ENCODE measurements at regions of chr1 and their contacts with region 1.

Region 1: DNA sequence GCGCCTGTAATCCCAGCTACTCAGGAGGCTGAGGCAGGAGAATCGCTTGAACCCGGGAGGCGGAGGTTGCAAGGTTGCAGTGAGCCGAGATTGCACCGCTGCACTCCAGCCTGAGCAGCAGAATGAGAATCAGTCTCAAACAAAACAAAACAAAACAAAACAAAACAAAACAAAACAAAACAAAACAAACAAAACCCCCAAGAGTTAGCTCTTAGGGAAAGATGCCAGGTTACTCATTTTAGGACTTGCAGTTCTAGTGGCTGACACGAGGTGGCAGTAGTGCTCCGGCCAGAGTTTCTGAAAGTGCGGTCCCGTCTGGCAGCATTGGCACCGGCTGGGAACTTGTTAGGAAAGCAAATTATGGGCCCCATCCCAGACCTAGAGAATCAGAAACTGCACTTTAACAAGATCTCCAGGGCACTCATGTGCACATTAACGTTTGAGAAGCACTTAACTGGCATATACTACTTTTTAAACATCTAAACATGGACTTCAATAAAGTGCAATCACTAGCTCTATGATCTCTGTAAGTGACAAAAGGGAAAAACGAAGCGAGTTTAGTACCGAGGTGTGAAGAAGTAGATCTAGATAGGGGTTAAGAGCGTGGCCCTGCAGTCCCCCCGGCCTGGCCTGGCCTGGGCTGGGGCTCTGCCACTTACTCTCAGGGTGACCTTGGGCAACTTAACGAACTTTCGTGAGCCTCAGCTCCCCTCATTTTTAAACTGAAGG is 41.9 kb upstream of the TNFRSF1B start:
- DNase-seq: peak; percentile 88
- H3K4me3 Mint-ChIP-seq: no peak overlapping the region
- H3K27ac Mint-ChIP-seq: no peak overlapping the region
- H3K4me1 Mint-ChIP-seq: peaks cover 44% of the 10 kb centered on the region
- H3K27me3 Mint-ChIP-seq: no peaks in the 10 kb centered on the region

Region 2: GRCh38 chr1:12073796-12074195 is 51.1 kb before region 1 on chr1:
- CTCF ChIA-PET with region 1: no interaction called
- intact Hi-C with region 1: no loop called
- DNase-seq: no peak
- H3K4me3 Mint-ChIP-seq: no peak overlapping the region
- H3K27ac Mint-ChIP-seq: no peak overlapping the region
- H3K4me1 Mint-ChIP-seq: peaks cover 10% of the 10 kb centered on the region
- H3K27me3 Mint-ChIP-seq: peaks cover 15% of the 10 kb centered on the region

Region 3: DNA sequence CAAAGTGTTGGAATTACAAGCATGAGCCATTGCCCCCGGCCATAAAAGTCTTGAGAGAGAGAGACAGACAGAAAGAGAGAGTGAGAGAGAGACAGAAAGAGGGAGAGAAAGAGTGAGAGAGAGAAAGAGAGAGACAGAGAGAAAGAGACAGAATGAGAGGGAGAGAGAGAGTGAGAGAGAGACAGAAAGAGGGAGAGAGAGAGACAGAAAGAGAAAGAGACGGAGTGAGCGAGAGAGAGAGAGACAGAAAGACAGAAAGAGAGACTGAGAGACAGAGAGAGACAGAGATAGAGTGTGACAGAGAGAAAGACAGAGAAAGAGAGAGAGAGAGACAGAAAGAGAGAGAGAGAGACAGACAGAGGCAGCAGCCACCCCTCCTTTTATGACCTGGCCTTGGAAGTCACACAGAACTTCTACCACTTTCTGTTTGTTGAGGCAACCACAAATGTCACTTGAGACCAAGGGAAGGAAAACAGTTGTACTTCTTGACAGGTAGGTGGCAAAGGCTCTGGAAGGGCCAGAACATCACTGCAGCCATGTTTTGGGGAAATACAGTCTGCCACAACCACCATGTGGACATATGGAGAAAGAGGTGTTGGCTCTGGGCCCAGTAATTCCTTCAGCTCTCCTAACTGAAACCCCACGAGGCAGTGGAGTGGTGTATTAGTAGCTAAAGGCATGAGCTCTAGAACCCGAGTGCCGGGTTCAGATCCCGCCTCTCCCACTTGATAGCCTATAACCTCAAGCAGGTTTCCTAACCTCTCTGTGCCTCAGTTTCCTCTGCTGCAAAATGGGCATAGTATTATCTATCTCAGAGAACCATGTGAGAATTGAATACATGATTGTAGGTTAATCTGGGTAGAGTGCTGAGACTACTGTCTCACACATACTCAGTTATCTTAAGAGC is 11.2 kb before region 1 on chr1:
- CTCF ChIA-PET with region 1: interaction called, 15 read pairs
- intact Hi-C with region 1: no loop called
- DNase-seq: no peak
- H3K4me3 Mint-ChIP-seq: no peak overlapping the region
- H3K27ac Mint-ChIP-seq: no peak overlapping the region
- H3K4me1 Mint-ChIP-seq: peaks cover 4% of the 10 kb centered on the region
- H3K27me3 Mint-ChIP-seq: no peaks in the 10 kb centered on the region

Region 4: DNA sequence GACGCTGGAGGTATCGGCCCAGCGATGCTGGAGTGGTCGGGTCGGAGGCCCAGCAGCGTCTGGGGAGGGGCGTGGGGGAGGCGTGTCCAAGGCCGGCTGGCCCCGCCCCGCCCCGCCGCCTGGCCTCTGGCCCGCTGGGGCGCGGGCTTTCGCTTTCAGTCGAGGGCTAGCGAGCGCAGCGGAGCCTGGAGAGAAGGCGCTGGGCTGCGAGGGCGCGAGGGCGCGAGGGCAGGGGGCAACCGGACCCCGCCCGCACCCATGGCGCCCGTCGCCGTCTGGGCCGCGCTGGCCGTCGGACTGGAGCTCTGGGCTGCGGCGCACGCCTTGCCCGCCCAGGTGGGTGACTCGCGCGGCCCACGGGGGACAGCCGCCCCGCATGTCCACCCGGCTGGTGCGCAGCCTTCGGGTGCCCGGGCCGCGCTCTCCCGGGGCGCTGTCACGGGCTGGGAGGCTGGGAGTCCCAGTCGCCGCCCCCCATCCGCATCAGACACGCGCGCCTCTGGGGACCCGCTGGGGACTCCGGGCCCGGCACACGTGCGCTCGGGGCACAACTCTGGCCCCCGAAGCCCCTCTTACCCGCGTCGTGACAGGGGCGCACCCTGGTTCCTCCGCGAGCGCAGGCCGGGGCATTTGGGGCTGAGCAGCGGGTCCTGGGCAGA is 42.1 kb after region 1 on chr1 and contains the start of gene TNFRSF1B:
- CTCF ChIA-PET with region 1: interaction called, 21 read pairs
- intact Hi-C with region 1: no loop called
- DNase-seq: peak; percentile 66
- H3K4me3 Mint-ChIP-seq: peak within 1 kb of the TSS; percentile 99
- H3K27ac Mint-ChIP-seq: peak within 1 kb of the TSS; percentile 97
- H3K4me1 Mint-ChIP-seq: peaks cover 66% of the 10 kb centered on the region
- H3K27me3 Mint-ChIP-seq: no peaks in the 10 kb centered on the region
- total RNA-seq, gene TNFRSF1B: 69.4 to 75.7 TPM

Region 5: GRCh38 chr1:12196641-12197482 is 72.0 kb after region 1 on chr1:
- CTCF ChIA-PET with region 1: interaction called, 301 read pairs
- intact Hi-C with region 1: no loop called
- DNase-seq: peak; percentile 42
- H3K4me3 Mint-ChIP-seq: no peak overlapping the region
- H3K27ac Mint-ChIP-seq: no peak overlapping the region
- H3K4me1 Mint-ChIP-seq: peaks cover 15% of the 10 kb centered on the region
- H3K27me3 Mint-ChIP-seq: no peaks in the 10 kb centered on the region

Region 6: DNA sequence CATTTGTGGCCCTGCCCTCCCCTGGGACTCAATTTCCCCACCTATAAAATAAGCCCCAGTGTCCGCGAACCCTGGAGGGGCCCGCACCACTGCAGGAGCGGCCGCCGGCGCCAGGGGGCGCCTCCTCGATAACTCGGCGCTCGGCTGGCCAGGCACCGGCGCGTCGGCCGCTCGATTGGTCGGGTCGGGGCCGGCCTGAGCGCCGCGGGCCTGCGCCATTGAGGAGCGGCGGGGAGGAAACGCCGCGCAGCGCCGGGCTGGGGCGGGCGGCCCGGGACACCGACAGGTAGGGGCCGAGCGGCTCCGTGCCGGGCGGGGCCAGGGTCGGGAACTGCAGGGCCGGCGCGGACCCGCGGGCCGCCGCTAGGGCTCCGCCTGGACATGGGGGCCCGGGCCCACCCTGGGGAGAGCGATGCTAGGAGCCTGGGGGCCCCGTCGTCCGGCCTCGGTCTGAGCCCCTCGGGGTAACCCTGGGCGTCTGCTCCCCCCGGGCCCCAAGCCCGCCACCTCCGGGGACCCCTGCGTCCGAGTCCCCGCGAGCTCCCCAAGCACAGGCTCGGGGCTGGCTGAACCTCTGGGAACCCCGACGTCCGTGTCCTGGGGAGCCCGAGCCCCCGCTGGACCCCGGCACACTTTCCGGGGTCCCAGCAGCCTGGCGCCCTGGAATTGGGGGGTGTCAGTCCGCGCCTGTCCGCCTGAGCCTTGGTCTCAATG is 105.1 kb after region 1 on chr1 and contains the start of gene VPS13D:
- CTCF ChIA-PET with region 1: interaction called, 23 read pairs
- intact Hi-C with region 1: no loop called
- DNase-seq: peak; percentile 86
- H3K4me3 Mint-ChIP-seq: peak within 1 kb of the TSS; percentile 80
- H3K27ac Mint-ChIP-seq: no peak within 1 kb of the TSS
- H3K4me1 Mint-ChIP-seq: peaks cover 21% of the 10 kb centered on the region
- H3K27me3 Mint-ChIP-seq: no peaks in the 10 kb centered on the region
- total RNA-seq, gene VPS13D: 20.0 to 23.3 TPM

Region 7: DNA sequence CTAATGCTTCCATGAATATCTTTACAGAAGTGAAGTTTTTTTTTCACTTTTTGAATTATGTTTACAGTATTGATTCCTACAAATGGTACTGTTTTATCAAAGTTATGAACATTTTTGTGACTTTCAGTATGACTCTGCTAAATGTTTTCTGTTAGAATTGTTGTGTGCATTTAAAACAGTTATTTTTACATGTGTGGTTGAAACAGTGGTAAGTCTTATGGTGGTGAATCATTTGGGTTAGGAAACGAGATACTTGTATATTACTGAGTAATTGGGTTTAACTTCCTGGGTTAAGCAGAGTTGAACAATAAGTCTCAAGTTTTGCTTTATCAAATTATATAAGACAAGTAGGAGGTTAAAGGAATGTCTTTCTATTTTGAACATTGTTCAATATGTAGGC is 171.8 kb after region 1 on chr1:
- CTCF ChIA-PET with region 1: interaction called, 4 read pairs
- intact Hi-C with region 1: loop called (anchors 1 kb)
- DNase-seq: no peak
- H3K4me3 Mint-ChIP-seq: no peak overlapping the region
- H3K27ac Mint-ChIP-seq: peak overlapping the region; percentile 51
- H3K4me1 Mint-ChIP-seq: peaks cover 30% of the 10 kb centered on the region
- H3K27me3 Mint-ChIP-seq: no peaks in the 10 kb centered on the region

Measured in activated naive CD4-positive, alpha-beta T cell treated with anti-CD3 and anti-CD28 coated beads for 36 hours (primary cell).